ENCODE measurements at regions of chr2 and their contacts with region 1.

Region 1: GRCh38 chr2:131093006-131093695 is at the start of gene FAM168B:
- DNase-seq: peak; percentile 86 to 93 (median 91)
- H3K4me3 ChIP-seq: peak within 1 kb of the TSS; percentile 86 to 91
- H3K4me3 Mint-ChIP-seq: peak within 1 kb of the TSS; percentile 85 to 99 (median 93)
- H3K27ac ChIP-seq: peak within 1 kb of the TSS; percentile 89
- H3K27ac Mint-ChIP-seq: peak within 1 kb of the TSS; percentile 92 to 98 (median 97)
- H3K4me1 ChIP-seq: peaks cover 22% of the 10 kb centered on the region
- H3K4me1 Mint-ChIP-seq: peaks cover 12 to 38% (median 22%) of the 10 kb centered on the region in 4 donors
- H3K27me3 ChIP-seq: no peaks in the 10 kb centered on the region
- H3K27me3 Mint-ChIP-seq: no peaks in the 10 kb centered on the region
- total RNA-seq, gene FAM168B: 79.4 to 81.0 TPM

Region 2: GRCh38 chr2:130727286-130728018 is 365.7 kb before region 1 on chr2:
- CTCF ChIA-PET with region 1: no interaction called
- POLR2A ChIA-PET with region 1: no interaction called
- intact Hi-C with region 1: loop called (anchors 1 kb)
- DNase-seq: peak; percentile 90 to 95 (median 92)
- H3K4me3 ChIP-seq: peak overlapping the region; percentile 81 to 83
- H3K4me3 Mint-ChIP-seq: peak overlapping the region; percentile 85 to 92 (median 88)
- H3K27ac ChIP-seq: peak overlapping the region; percentile 80
- H3K27ac Mint-ChIP-seq: peak overlapping the region; percentile 89 to 97 (median 95)
- H3K4me1 ChIP-seq: peaks cover 22% of the 10 kb centered on the region
- H3K4me1 Mint-ChIP-seq: peaks cover 5 to 34% (median 17%) of the 10 kb centered on the region in 4 donors
- H3K27me3 ChIP-seq: no peaks in the 10 kb centered on the region
- H3K27me3 Mint-ChIP-seq: no peaks in the 10 kb centered on the region

Region 3: DNA sequence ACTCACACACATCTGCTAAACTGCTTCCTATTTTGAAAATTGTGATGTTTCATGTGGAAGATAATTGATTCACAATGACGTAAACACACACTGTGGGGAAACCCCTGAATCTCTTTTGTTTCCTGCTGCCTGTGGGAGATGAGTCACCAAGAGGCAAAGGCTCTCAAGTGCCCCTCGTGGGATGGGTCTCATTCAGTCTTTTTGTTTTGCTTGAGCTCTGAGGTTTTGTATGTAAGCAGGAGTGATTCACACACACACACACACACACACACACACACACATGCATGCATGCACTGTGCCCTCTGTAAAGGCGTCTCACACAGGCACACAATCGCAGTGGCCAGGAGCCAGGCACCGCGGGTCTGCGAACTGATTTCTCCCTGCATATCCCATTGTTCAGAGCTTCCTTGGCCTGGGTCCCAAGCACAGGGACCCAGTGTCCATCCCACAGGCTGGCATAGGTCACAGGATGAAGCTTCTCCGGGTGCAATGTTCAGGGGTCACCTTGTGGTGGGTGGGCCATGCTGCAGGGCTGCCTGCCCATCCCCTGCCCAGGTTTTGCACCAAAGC is 268.6 kb before region 1 on chr2:
- CTCF ChIA-PET with region 1: no interaction called
- POLR2A ChIA-PET with region 1: no interaction called
- intact Hi-C with region 1: loop called (anchors 1 kb)
- DNase-seq: peak; percentile 77 to 95 (median 84)
- H3K4me3 ChIP-seq: peak overlapping the region in 1 of 2 donors; percentile 42
- H3K4me3 Mint-ChIP-seq: peak overlapping the region; percentile 20 to 72 (median 34)
- H3K27ac ChIP-seq: peak overlapping the region; percentile 27
- H3K27ac Mint-ChIP-seq: peak overlapping the region; percentile 86 to 98 (median 94)
- H3K4me1 ChIP-seq: peaks cover 20% of the 10 kb centered on the region
- H3K4me1 Mint-ChIP-seq: peaks cover 11 to 35% (median 19%) of the 10 kb centered on the region in 4 donors
- H3K27me3 ChIP-seq: no peaks in the 10 kb centered on the region
- H3K27me3 Mint-ChIP-seq: no peaks in the 10 kb centered on the region

Region 4: DNA sequence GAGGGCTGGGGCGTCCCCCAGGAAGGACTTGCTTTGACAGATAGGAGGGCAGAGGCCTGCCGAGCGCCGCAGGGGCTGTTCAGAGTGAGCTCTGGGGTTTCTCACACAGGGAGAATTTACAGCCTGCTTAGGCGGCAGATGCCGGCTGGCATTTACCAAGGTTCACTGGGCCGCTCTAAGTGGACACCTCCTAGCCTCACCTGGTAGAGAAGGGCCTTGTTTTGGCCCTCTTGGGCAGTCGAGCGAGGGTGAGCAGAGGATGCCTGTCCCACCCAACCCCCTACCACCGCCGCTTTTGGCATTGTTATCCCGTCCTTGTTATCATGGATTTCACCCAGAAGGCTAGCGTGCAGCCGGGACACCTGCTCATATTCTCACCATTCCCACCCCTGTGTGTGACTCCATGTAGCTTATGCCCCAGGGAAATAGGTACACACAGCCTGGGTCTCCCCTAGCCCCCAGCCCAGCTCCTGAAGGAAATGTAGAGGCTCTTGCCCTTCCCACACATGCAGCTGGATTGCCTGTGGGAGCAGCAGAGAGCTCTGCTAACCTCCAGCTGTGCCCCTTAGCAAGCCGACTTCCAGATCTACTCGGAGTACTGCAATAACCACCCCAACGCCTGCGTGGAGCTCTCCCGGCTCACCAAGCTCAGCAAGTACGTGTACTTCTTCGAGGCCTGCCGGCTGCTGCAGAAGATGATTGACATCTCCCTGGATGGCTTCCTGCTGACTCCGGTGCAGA is 52.3 kb before region 1 on chr2:
- CTCF ChIA-PET with region 1: no interaction called
- POLR2A ChIA-PET with region 1: interaction called, 14 read pairs
- intact Hi-C with region 1: no loop called
- DNase-seq: no peak
- H3K4me3 ChIP-seq: peak overlapping the region; percentile 34 to 45
- H3K4me3 Mint-ChIP-seq: peak overlapping the region; percentile 78 to 92 (median 84)
- H3K27ac ChIP-seq: no peak overlapping the region
- H3K27ac Mint-ChIP-seq: peak overlapping the region; percentile 15 to 89 (median 75)
- H3K4me1 ChIP-seq: peaks cover 39% of the 10 kb centered on the region
- H3K4me1 Mint-ChIP-seq: peaks cover 16 to 45% (median 28%) of the 10 kb centered on the region in 4 donors
- H3K27me3 ChIP-seq: no peaks in the 10 kb centered on the region
- H3K27me3 Mint-ChIP-seq: peaks cover 4 to 5% of the 10 kb centered on the region in 2 donors

Region 5: GRCh38 chr2:131105156-131105949 is 12.2 kb after region 1 on chr2 and contains the start of gene PLEKHB2:
- CTCF ChIA-PET with region 1: interaction called, 28 read pairs
- POLR2A ChIA-PET with region 1: interaction called, 99 read pairs
- intact Hi-C with region 1: loop called (anchors 1 kb)
- DNase-seq: peak; percentile 89 to 97 (median 92)
- H3K4me3 ChIP-seq: peak within 1 kb of the TSS; percentile 90 to 91
- H3K4me3 Mint-ChIP-seq: peak within 1 kb of the TSS; percentile 94 to 99 (median 98)
- H3K27ac ChIP-seq: peak within 1 kb of the TSS; percentile 95
- H3K27ac Mint-ChIP-seq: peak within 1 kb of the TSS; percentile 92 to 99 (median 97)
- H3K4me1 ChIP-seq: peaks cover 45% of the 10 kb centered on the region
- H3K4me1 Mint-ChIP-seq: peaks cover 34 to 59% (median 45%) of the 10 kb centered on the region in 4 donors
- H3K27me3 ChIP-seq: no peaks in the 10 kb centered on the region
- H3K27me3 Mint-ChIP-seq: no peaks in the 10 kb centered on the region
- total RNA-seq, gene PLEKHB2: 45.5 to 48.3 TPM

Region 6: GRCh38 chr2:131535526-131535925 is 442.4 kb after region 1 on chr2:
- CTCF ChIA-PET with region 1: no interaction called
- POLR2A ChIA-PET with region 1: no interaction called
- intact Hi-C with region 1: no loop called
- DNase-seq: no peak
- H3K4me3 ChIP-seq: no peak overlapping the region
- H3K4me3 Mint-ChIP-seq: no peak overlapping the region
- H3K27ac ChIP-seq: no peak overlapping the region
- H3K27ac Mint-ChIP-seq: no peak overlapping the region
- H3K4me1 ChIP-seq: no peaks in the 10 kb centered on the region
- H3K4me1 Mint-ChIP-seq: no peaks in the 10 kb centered on the region
- H3K27me3 ChIP-seq: no peaks in the 10 kb centered on the region
- H3K27me3 Mint-ChIP-seq: peaks cover 0 to 2% of the 10 kb centered on the region in 2 donors